Activated naive CD4-positive, alpha-beta T cell treated with anti-CD3 and anti-CD28 coated beads for 36 hours (primary cell): ENCODE measurements at regions of chr12 and their contacts with region 1.

Region 1: DNA sequence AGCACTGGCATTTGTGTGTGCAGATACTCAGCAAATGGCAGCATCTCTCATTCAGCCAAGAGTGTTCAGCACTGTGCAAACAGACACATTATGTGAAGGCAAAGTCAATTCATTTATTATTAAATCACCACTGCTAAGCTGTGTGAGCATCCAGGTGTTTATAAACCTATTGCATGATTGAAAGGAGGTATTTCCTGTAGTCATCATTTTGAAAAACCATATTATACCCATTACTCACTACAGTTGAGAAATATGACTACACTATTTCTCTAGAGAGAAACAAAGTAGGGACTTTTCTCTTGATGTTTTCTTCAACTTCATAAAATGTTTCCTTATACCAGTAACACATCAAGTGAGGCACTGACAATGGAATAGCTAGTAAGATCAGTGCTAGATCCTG is 13.7 kb downstream of the SPX start:
- DNase-seq: no peak
- H3K4me3 Mint-ChIP-seq: no peak overlapping the region
- H3K27ac Mint-ChIP-seq: no peak overlapping the region
- H3K4me1 Mint-ChIP-seq: peaks cover 12% of the 10 kb centered on the region
- H3K27me3 Mint-ChIP-seq: no peaks in the 10 kb centered on the region

Region 2: GRCh38 chr12:21476949-21477348 is 62.8 kb before region 1 on chr12:
- CTCF ChIA-PET with region 1: no interaction called
- intact Hi-C with region 1: loop called (anchors 2 kb)
- DNase-seq: no peak
- H3K4me3 Mint-ChIP-seq: no peak overlapping the region
- H3K27ac Mint-ChIP-seq: peak overlapping the region; percentile 50
- H3K4me1 Mint-ChIP-seq: peaks cover 16% of the 10 kb centered on the region
- H3K27me3 Mint-ChIP-seq: no peaks in the 10 kb centered on the region

Region 3: GRCh38 chr12:21527451-21528180 is 12.2 kb before region 1 on chr12:
- CTCF ChIA-PET with region 1: no interaction called
- intact Hi-C with region 1: loop called (anchors 1 kb)
- DNase-seq: peak; percentile 74
- H3K4me3 Mint-ChIP-seq: peak overlapping the region; percentile 59
- H3K27ac Mint-ChIP-seq: no peak overlapping the region
- H3K4me1 Mint-ChIP-seq: peaks cover 2% of the 10 kb centered on the region
- H3K27me3 Mint-ChIP-seq: peaks cover 20% of the 10 kb centered on the region

Region 4: GRCh38 chr12:21559855-21560569 is 20.2 kb after region 1 on chr12:
- CTCF ChIA-PET with region 1: no interaction called
- intact Hi-C with region 1: loop called (anchors 2 kb)
- DNase-seq: no peak
- H3K4me3 Mint-ChIP-seq: no peak overlapping the region
- H3K27ac Mint-ChIP-seq: peak overlapping the region; percentile 32
- H3K4me1 Mint-ChIP-seq: peaks cover 7% of the 10 kb centered on the region
- H3K27me3 Mint-ChIP-seq: no peaks in the 10 kb centered on the region

Region 5: DNA sequence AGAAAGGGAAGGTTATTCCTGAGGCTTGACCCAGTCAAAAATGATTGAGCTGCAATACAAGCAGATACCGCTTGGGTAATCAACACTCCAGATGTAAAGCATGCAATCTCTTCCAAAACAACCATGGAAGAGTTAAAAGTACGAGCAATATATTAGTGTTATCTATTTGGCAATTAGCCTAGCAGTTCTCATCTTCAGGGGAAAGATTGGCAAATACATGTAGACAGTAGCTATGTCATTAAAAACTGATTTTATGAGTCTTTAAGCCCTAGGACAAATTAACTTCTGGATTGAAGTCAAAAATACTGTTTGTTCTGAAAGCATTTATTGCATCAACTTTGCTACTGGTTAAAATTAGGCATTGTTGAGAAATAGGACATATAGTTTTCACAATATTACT is 74.1 kb after region 1 on chr12:
- CTCF ChIA-PET with region 1: no interaction called
- intact Hi-C with region 1: loop called (anchors 1 kb)
- DNase-seq: no peak
- H3K4me3 Mint-ChIP-seq: no peak overlapping the region
- H3K27ac Mint-ChIP-seq: peak overlapping the region; percentile 85
- H3K4me1 Mint-ChIP-seq: peaks cover 49% of the 10 kb centered on the region
- H3K27me3 Mint-ChIP-seq: no peaks in the 10 kb centered on the region